Activated naive CD4-positive, alpha-beta T cell treated with anti-CD3 and anti-CD28 coated beads for 36 hours (primary cell): ENCODE measurements at regions of chr4 and their contacts with region 1.

Region 1: GRCh38 chr4:57163530-57164459 is 53.6 kb upstream of the IGFBP7 start:
- DNase-seq: peak; percentile 78
- H3K4me3 Mint-ChIP-seq: peak overlapping the region; percentile 74
- H3K27ac Mint-ChIP-seq: no peak overlapping the region
- H3K4me1 Mint-ChIP-seq: peaks cover 8% of the 10 kb centered on the region
- H3K27me3 Mint-ChIP-seq: peaks cover 18% of the 10 kb centered on the region

Region 2: GRCh38 chr4:57053508-57053907 is 110.3 kb before region 1 on chr4:
- CTCF ChIA-PET with region 1: no interaction called
- intact Hi-C with region 1: no loop called
- DNase-seq: no peak
- H3K4me3 Mint-ChIP-seq: no peak overlapping the region
- H3K27ac Mint-ChIP-seq: no peak overlapping the region
- H3K4me1 Mint-ChIP-seq: no peaks in the 10 kb centered on the region
- H3K27me3 Mint-ChIP-seq: peaks cover 24% of the 10 kb centered on the region

Region 3: GRCh38 chr4:57190601-57191481 is 27.0 kb after region 1 on chr4:
- CTCF ChIA-PET with region 1: interaction called, 21 read pairs
- intact Hi-C with region 1: no loop called
- DNase-seq: peak; percentile 35
- H3K4me3 Mint-ChIP-seq: no peak overlapping the region
- H3K27ac Mint-ChIP-seq: no peak overlapping the region
- H3K4me1 Mint-ChIP-seq: no peaks in the 10 kb centered on the region
- H3K27me3 Mint-ChIP-seq: peaks cover 10% of the 10 kb centered on the region

Region 4: GRCh38 chr4:57206172-57206571 is 42.4 kb after region 1 on chr4:
- CTCF ChIA-PET with region 1: interaction called, 11 read pairs
- intact Hi-C with region 1: no loop called
- DNase-seq: no peak
- H3K4me3 Mint-ChIP-seq: no peak overlapping the region
- H3K27ac Mint-ChIP-seq: no peak overlapping the region
- H3K4me1 Mint-ChIP-seq: no peaks in the 10 kb centered on the region
- H3K27me3 Mint-ChIP-seq: peaks cover 18% of the 10 kb centered on the region

Region 5: GRCh38 chr4:57426779-57427395 is 263.1 kb after region 1 on chr4:
- CTCF ChIA-PET with region 1: interaction called, 10 read pairs
- intact Hi-C with region 1: loop called (anchors 5 kb)
- DNase-seq: peak; percentile 63
- H3K4me3 Mint-ChIP-seq: no peak overlapping the region
- H3K27ac Mint-ChIP-seq: no peak overlapping the region
- H3K4me1 Mint-ChIP-seq: no peaks in the 10 kb centered on the region
- H3K27me3 Mint-ChIP-seq: peaks cover 10% of the 10 kb centered on the region

Region 6: DNA sequence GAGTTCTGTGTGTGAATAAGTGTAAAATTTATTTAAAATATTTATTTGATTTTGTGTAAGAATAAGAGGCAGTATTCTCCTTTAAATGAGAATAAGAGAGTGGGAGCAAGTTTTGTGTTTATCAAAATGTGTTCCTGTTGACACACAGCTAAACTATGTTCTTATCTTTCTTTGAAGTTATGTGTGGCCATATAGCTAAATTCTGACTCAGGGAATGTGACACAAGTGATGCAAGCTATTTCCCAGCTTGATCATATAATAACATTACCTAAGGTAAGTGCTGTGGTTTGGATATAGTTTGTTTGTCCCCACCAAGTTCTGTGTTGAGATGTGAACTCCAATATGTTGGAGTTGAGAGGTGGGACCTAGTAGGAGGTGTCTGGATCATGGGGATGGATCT is 686.3 kb after region 1 on chr4:
- CTCF ChIA-PET with region 1: no interaction called
- intact Hi-C with region 1: no loop called
- DNase-seq: no peak
- H3K4me3 Mint-ChIP-seq: no peak overlapping the region
- H3K27ac Mint-ChIP-seq: no peak overlapping the region
- H3K4me1 Mint-ChIP-seq: no peaks in the 10 kb centered on the region
- H3K27me3 Mint-ChIP-seq: no peaks in the 10 kb centered on the region

Region 7: GRCh38 chr4:58061970-58062369 is 898.2 kb after region 1 on chr4:
- CTCF ChIA-PET with region 1: no interaction called
- intact Hi-C with region 1: loop called (anchors 5 kb)
- DNase-seq: no peak
- H3K4me3 Mint-ChIP-seq: no peak overlapping the region
- H3K27ac Mint-ChIP-seq: no peak overlapping the region
- H3K4me1 Mint-ChIP-seq: no peaks in the 10 kb centered on the region
- H3K27me3 Mint-ChIP-seq: no peaks in the 10 kb centered on the region